ENCODE measurements at regions of chr5 and their contacts with region 1.

Region 1: GRCh38 chr5:132753135-132753987 is 6.1 kb downstream of the CCNI2 start:
- DNase-seq: peak in 1 of 9 donors; percentile 30
- ATAC-seq: peak; percentile 29
- H3K4me3 ChIP-seq: no peak overlapping the region
- H3K4me3 Mint-ChIP-seq: no peak overlapping the region
- H3K27ac ChIP-seq: no peak overlapping the region
- H3K27ac Mint-ChIP-seq: peak overlapping the region in 1 of 9 donors; percentile 54
- H3K4me1 ChIP-seq: no peaks in the 10 kb centered on the region
- H3K4me1 Mint-ChIP-seq: peaks cover 0 to 60% (median 3%) of the 10 kb centered on the region in 7 donors
- H3K27me3 ChIP-seq: no peaks in the 10 kb centered on the region
- H3K27me3 Mint-ChIP-seq: no peaks in the 10 kb centered on the region

Region 2: GRCh38 chr5:132729896-132730295 is 23.5 kb before region 1 on chr5:
- CTCF ChIA-PET with region 1: no interaction called
- POLR2A ChIA-PET with region 1: no interaction called
- intact Hi-C with region 1: no loop called
- DNase-seq: no peak
- ATAC-seq: no peak
- H3K4me3 ChIP-seq: no peak overlapping the region
- H3K4me3 Mint-ChIP-seq: no peak overlapping the region
- H3K27ac ChIP-seq: no peak overlapping the region
- H3K27ac Mint-ChIP-seq: peak overlapping the region in 2 of 9 donors; percentile 38 to 86
- H3K4me1 ChIP-seq: no peaks in the 10 kb centered on the region
- H3K4me1 Mint-ChIP-seq: peaks cover 4 to 26% (median 15%) of the 10 kb centered on the region in 7 donors
- H3K27me3 ChIP-seq: no peaks in the 10 kb centered on the region
- H3K27me3 Mint-ChIP-seq: no peaks in the 10 kb centered on the region

Region 3: DNA sequence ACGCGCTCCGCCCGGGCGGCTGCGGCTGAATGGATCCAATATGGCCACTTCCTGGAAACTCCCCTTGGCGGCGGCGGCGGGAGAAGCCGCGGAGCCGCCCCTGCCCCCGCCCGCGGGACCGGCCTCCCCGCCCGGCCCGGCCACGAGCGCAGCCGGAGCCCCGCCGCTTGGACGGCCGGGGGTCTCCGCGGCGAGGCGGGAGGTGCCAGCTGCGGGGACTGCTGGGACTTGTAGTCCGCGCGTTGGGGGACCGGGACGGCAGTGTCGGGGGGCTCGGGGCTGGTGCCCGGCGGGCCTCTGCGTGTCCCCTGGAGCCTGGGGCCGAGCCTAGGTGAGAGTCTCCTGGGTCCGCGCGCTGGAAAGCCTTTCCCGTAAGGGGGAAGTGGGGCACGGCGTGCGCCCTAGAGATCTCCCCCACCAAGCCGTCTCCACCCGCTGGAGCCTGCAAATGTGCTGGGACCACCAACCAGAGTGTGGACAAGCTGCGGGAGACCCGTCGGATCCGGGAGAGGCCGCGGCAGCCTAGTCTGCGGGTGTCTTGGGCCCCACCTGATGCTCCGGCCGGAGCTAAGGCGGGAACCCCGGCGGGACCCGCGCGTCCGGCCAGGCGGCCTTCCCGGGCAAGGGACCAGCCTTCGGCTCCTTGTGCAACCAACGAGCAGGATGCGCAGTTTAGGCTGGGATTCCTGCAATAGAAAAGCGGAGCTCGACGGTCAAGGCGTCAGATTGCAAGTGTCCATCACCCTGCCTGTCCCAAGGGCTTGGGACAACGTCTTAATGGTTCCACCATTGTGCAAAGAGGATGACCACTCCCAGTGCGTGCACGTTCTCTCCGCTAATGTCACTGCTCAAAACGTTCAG is 24.1 kb after region 1 on chr5 and contains the start of gene SEPTIN8:
- CTCF ChIA-PET with region 1: no interaction called
- POLR2A ChIA-PET with region 1: interaction called, 5 read pairs
- intact Hi-C with region 1: loop called (anchors 1 to 2 kb)
- DNase-seq: peak in 7 of 9 donors; percentile 1 to 70 (median 26)
- ATAC-seq: peak; percentile 72
- H3K4me3 ChIP-seq: peak within 1 kb of the TSS; percentile 68
- H3K4me3 Mint-ChIP-seq: peak within 1 kb of the TSS; percentile 71 to 91 (median 84)
- H3K27ac ChIP-seq: no peak within 1 kb of the TSS
- H3K27ac Mint-ChIP-seq: peak within 1 kb of the TSS in 5 of 9 donors; percentile 20 to 85 (median 56)
- H3K4me1 ChIP-seq: peaks cover 7 to 15% of the 10 kb centered on the region in 2 donors
- H3K4me1 Mint-ChIP-seq: peaks cover 0 to 41% (median 26%) of the 10 kb centered on the region in 7 donors
- H3K27me3 ChIP-seq: peaks cover 0 to 8% of the 10 kb centered on the region in 2 donors
- H3K27me3 Mint-ChIP-seq: peaks cover 33 to 63% (median 45%) of the 10 kb centered on the region in 5 donors
- total RNA-seq, gene SEPTIN8: 2.7 to 42.1 (median 5.2) TPM

Region 4: GRCh38 chr5:133051580-133052332 is 298.4 kb after region 1 on chr5 and contains the start of gene HSPA4:
- CTCF ChIA-PET with region 1: no interaction called
- POLR2A ChIA-PET with region 1: no interaction called
- intact Hi-C with region 1: no loop called
- DNase-seq: peak; percentile 86 to 99 (median 98)
- ATAC-seq: peak; percentile 91
- H3K4me3 ChIP-seq: peak within 1 kb of the TSS; percentile 92
- H3K4me3 Mint-ChIP-seq: peak within 1 kb of the TSS; percentile 91 to 99 (median 98)
- H3K27ac ChIP-seq: peak within 1 kb of the TSS; percentile 98
- H3K27ac Mint-ChIP-seq: peak within 1 kb of the TSS; percentile 99 to 100 (median 100)
- H3K4me1 ChIP-seq: peaks cover 17 to 19% of the 10 kb centered on the region in 2 donors
- H3K4me1 Mint-ChIP-seq: peaks cover 31 to 70% (median 52%) of the 10 kb centered on the region in 7 donors
- H3K27me3 ChIP-seq: no peaks in the 10 kb centered on the region
- H3K27me3 Mint-ChIP-seq: no peaks in the 10 kb centered on the region
- total RNA-seq, gene HSPA4: 42.1 to 103 (median 50.0) TPM